Caco-2 (cell line): ENCODE measurements at regions of chr2 and their contacts with region 1.

Region 1: GRCh38 chr2:105037572-105038382 is at the start of gene MRPS9:
- DNase-seq: peak; percentile 98 to 99
- H3K4me3 ChIP-seq: peak within 1 kb of the TSS; percentile 97
- H3K4me3 Mint-ChIP-seq: peak within 1 kb of the TSS; percentile 85
- H3K27ac Mint-ChIP-seq: peak within 1 kb of the TSS; percentile 72
- H3K4me1 ChIP-seq: no peaks in the 10 kb centered on the region; the same call in 1 of the 2 replicates
- H3K4me1 Mint-ChIP-seq: peaks cover 12% of the 10 kb centered on the region
- H3K27me3 ChIP-seq: no peaks in the 10 kb centered on the region
- H3K27me3 Mint-ChIP-seq: no peaks in the 10 kb centered on the region
- CTCF ChIP-seq: no peak
- total RNA-seq, gene MRPS9: 67.9 and 68.6 TPM in 2 replicates

Region 2: GRCh38 chr2:105102963-105103421 is 65.2 kb after region 1 on chr2:
- CTCF ChIA-PET with region 1: interaction called, 3 read pairs
- POLR2A ChIA-PET with region 1: interaction called, 5 read pairs
- intact Hi-C with region 1: loop called (anchors 2 kb)
- DNase-seq: peak; percentile 86 to 93
- H3K4me3 ChIP-seq: 0 out of 2 replicates have a peak overlapping the region, but pooled peaks have one; percentile 13
- H3K4me3 Mint-ChIP-seq: peak overlapping the region; percentile 49
- H3K27ac Mint-ChIP-seq: peak overlapping the region; percentile 81
- H3K4me1 ChIP-seq: peaks cover 18% of the 10 kb centered on the region
- H3K4me1 Mint-ChIP-seq: peaks cover 29% of the 10 kb centered on the region
- H3K27me3 ChIP-seq: no peaks in the 10 kb centered on the region
- H3K27me3 Mint-ChIP-seq: no peaks in the 10 kb centered on the region
- CTCF ChIP-seq: no peak

Region 3: DNA sequence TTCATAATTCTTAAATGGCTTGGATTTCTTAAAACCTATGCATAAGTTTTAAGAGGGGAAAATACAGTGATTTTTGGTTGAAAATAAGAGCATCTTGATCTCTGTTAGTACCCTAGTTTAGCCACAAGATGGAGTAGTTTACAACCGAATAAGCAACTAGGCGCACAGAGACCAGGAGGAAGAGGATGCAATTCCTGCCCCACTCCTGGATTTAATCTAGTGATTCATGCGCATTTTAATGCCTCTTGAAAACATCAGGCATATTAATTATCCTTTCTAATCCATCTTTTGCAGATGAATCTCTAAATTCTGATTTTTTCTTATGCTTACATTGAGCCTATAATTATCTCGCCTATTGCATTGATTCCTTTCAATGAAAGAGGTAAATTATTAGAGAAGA is 76.8 kb after region 1 on chr2:
- CTCF ChIA-PET with region 1: no interaction called
- POLR2A ChIA-PET with region 1: no interaction called
- intact Hi-C with region 1: no loop called
- DNase-seq: no peak
- H3K4me3 ChIP-seq: no peak overlapping the region
- H3K4me3 Mint-ChIP-seq: no peak overlapping the region
- H3K27ac Mint-ChIP-seq: no peak overlapping the region
- H3K4me1 ChIP-seq: peaks cover 8% of the 10 kb centered on the region
- H3K4me1 Mint-ChIP-seq: peaks cover 6% of the 10 kb centered on the region
- H3K27me3 ChIP-seq: no peaks in the 10 kb centered on the region
- H3K27me3 Mint-ChIP-seq: no peaks in the 10 kb centered on the region
- CTCF ChIP-seq: peak; percentile 68